Activated CD4-positive, alpha-beta T cell treated with anti-CD3 and anti-CD28 coated beads for 36 hours (primary cell): ENCODE measurements at regions of chr2 and their contacts with region 1.

Region 1: DNA sequence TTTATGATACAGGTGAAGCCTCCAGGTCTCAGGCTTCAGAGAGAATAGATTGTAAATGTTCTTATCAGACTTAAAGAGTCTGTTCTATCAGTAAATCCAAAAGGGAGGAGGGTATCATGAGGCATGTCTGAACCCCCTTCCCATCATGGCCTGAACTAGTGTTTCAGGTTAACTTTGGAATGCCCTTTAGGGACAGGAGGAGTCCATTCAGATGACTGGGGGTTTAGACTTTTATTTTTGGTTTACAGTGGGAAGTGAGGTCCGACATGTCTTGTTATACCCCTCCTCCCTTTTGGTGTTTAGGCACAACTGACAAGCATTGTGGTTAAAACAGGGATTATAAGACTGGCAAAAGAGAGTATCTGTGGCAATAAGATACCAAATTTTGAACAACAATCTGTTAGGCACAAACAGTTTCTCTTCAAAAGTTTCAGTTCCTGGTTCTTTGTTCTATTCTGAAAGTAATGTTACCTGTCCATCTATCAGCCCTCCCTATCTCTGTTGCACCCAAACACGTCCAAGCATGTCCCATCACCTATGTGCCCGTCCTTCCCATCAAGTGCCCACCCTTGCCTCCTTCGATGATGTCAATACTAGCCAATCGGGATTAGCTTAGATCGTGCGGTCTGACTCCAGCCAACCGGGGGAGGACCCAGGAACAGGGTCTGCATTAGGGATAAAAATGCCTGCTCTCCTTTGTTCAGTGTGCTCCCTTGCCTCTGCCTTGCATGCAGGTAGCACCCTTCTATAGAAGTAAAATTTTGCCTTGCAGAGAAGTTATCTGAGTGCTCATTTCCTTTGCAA is 16.4 kb downstream of the TCF23 start:
- DNase-seq: no peak
- ATAC-seq: no peak
- H3K4me3 Mint-ChIP-seq: no peak overlapping the region
- H3K27ac Mint-ChIP-seq: no peak overlapping the region
- H3K4me1 Mint-ChIP-seq: peaks cover 2% of the 10 kb centered on the region
- H3K27me3 Mint-ChIP-seq: peaks cover 1% of the 10 kb centered on the region

Region 2: GRCh38 chr2:26964446-26965130 is 200.6 kb before region 1 on chr2:
- CTCF ChIA-PET with region 1: interaction called, 5 read pairs
- POLR2A ChIA-PET with region 1: no interaction called
- intact Hi-C with region 1: loop called in 1 of 2 experiments (anchors 5 kb)
- DNase-seq: no peak
- ATAC-seq: no peak
- H3K4me3 Mint-ChIP-seq: no peak overlapping the region
- H3K27ac Mint-ChIP-seq: no peak overlapping the region
- H3K4me1 Mint-ChIP-seq: peaks cover 5% of the 10 kb centered on the region
- H3K27me3 Mint-ChIP-seq: peaks cover 28% of the 10 kb centered on the region

Region 3: DNA sequence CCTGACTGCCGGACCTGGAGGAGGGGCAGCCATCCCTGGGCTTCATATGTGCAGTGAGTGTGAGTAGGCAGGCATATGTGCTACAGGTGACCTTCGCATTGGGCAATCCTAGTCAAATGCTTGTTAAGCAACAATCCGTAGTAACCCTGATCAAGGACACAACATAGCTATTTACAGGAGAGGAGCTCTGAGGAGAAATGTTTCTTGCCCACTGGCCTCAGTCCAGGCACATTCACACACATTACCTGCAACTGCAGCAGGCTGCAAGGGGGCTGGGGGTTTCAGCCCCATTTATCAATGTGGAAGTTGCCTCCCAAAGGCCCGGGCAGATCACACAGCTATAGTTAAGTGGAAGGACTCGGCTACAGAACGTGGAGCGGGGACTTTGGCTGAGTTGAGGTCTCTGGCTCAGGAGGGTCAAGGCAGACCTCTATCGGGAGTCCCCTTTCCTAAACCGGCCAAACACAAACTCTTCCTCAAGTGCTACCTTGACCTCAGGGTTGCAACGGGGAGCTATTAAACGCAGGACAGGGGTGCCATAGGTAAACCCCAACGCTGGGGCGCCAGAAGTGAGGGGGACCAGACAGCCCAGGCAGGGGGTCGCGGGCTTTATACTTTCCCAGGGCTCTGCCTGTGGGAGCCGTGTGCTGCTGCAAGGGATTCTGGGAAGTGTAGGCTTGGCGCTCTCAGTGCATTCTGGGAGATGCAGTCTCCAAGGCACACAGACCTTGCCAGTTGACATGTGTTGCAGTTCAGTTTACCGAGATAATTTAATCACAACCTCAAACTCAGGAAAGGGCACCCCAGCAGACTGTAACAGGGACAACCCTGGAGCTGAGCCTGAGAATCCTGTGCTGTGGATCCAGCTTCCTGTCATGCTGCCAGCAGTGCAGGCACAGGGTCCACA is 69.2 kb before region 1 on chr2:
- CTCF ChIA-PET with region 1: no interaction called
- POLR2A ChIA-PET with region 1: no interaction called
- intact Hi-C with region 1: no loop called
- DNase-seq: peak; percentile 72
- ATAC-seq: peak; percentile 98
- H3K4me3 Mint-ChIP-seq: peak overlapping the region; percentile 35
- H3K27ac Mint-ChIP-seq: peak overlapping the region; percentile 30
- H3K4me1 Mint-ChIP-seq: peaks cover 10% of the 10 kb centered on the region
- H3K27me3 Mint-ChIP-seq: no peaks in the 10 kb centered on the region